ENCODE measurements at regions of chr7 and their contacts with region 1.

Region 1: DNA sequence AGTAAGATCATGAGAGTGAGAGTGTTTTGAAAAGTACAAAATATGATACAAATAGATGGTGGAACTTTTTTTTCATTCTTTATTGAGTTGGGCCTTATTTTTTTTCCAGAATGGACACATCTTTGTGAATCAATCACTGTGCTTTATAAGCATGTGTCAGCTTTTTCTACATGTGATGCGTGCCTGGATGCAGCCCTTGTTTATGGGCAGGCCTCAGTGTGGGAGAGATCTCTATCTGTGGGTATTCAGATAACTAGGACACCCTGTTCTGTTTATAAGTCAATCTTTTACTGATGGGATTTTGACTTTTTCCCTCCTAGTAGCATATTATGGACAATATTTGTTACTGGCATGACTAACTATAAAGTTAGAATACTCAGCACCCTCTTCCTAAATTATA is 42.9 kb upstream of the IKZF1 start:
- DNase-seq: peak; percentile 42
- H3K4me3 Mint-ChIP-seq: peak overlapping the region; percentile 0
- H3K27ac Mint-ChIP-seq: peak overlapping the region; percentile 94
- H3K4me1 Mint-ChIP-seq: peaks cover 84% of the 10 kb centered on the region
- H3K27me3 Mint-ChIP-seq: no peaks in the 10 kb centered on the region

Region 2: GRCh38 chr7:50174948-50175347 is 86.6 kb before region 1 on chr7:
- CTCF ChIA-PET with region 1: no interaction called
- intact Hi-C with region 1: no loop called
- DNase-seq: no peak
- H3K4me3 Mint-ChIP-seq: no peak overlapping the region
- H3K27ac Mint-ChIP-seq: no peak overlapping the region
- H3K4me1 Mint-ChIP-seq: no peaks in the 10 kb centered on the region
- H3K27me3 Mint-ChIP-seq: no peaks in the 10 kb centered on the region

Region 3: DNA sequence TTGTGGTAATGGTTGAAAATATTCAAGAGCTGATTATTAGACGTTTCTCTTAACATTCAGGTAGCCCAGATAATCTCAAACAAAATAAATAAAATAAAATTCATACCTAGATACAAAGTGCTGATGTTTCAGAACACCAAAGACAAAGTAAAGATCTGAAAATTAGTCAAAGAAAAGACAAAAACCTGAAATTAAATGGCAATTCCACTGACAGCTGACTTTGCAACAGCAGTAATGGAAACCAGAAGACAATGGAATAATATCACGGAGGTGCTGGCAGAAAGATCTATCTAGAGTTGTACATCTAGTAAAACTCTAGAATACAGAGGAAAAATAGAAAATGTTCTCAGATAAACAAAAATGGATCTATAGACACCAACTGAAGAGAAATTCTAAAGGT is 15.0 kb before region 1 on chr7:
- CTCF ChIA-PET with region 1: interaction called, 3 read pairs
- intact Hi-C with region 1: loop called (anchors 2 kb)
- DNase-seq: no peak
- H3K4me3 Mint-ChIP-seq: no peak overlapping the region
- H3K27ac Mint-ChIP-seq: no peak overlapping the region
- H3K4me1 Mint-ChIP-seq: peaks cover 16% of the 10 kb centered on the region
- H3K27me3 Mint-ChIP-seq: no peaks in the 10 kb centered on the region

Region 4: GRCh38 chr7:51055039-51055840 is 793.6 kb after region 1 on chr7:
- CTCF ChIA-PET with region 1: no interaction called
- intact Hi-C with region 1: no loop called
- DNase-seq: no peak
- H3K4me3 Mint-ChIP-seq: no peak overlapping the region
- H3K27ac Mint-ChIP-seq: no peak overlapping the region
- H3K4me1 Mint-ChIP-seq: no peaks in the 10 kb centered on the region
- H3K27me3 Mint-ChIP-seq: no peaks in the 10 kb centered on the region

Measured in activated naive CD4-positive, alpha-beta T cell treated with anti-CD3 and anti-CD28 coated beads for 36 hours (primary cell).